ENCODE measurements at regions of chr1 and their contacts with region 1.

Region 1: DNA sequence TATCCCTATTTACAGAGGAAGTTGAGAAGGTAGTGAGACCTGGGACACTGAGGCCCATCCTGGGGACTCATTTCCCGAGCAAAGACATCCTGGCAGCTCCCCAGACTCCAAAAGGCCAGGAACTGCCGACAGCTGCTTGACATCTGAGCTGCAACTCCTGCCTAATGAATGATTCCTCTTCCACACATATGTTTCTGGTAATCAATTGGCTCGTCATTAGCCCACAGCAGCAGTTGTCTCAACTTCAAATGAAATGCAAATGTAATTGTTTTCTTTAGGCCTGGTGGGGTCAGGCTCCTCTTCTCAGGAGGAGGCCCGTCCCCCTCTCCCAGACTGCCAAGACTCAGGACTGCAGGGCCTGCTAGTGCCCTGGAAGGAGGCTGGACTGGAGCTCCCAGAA is 61.8 kb upstream of the DISP3 start:
- DNase-seq: no peak
- H3K4me3 ChIP-seq: no peak overlapping the region
- H3K4me3 Mint-ChIP-seq: no peak overlapping the region
- H3K27ac Mint-ChIP-seq: no peak overlapping the region
- H3K4me1 ChIP-seq: no peaks in the 10 kb centered on the region
- H3K4me1 Mint-ChIP-seq: no peaks in the 10 kb centered on the region
- H3K27me3 ChIP-seq: peaks cover 1% of the 10 kb centered on the region; the same call in 1 of the 2 replicates
- H3K27me3 Mint-ChIP-seq: peaks cover 25% of the 10 kb centered on the region
- CTCF ChIP-seq: no peak

Region 2: DNA sequence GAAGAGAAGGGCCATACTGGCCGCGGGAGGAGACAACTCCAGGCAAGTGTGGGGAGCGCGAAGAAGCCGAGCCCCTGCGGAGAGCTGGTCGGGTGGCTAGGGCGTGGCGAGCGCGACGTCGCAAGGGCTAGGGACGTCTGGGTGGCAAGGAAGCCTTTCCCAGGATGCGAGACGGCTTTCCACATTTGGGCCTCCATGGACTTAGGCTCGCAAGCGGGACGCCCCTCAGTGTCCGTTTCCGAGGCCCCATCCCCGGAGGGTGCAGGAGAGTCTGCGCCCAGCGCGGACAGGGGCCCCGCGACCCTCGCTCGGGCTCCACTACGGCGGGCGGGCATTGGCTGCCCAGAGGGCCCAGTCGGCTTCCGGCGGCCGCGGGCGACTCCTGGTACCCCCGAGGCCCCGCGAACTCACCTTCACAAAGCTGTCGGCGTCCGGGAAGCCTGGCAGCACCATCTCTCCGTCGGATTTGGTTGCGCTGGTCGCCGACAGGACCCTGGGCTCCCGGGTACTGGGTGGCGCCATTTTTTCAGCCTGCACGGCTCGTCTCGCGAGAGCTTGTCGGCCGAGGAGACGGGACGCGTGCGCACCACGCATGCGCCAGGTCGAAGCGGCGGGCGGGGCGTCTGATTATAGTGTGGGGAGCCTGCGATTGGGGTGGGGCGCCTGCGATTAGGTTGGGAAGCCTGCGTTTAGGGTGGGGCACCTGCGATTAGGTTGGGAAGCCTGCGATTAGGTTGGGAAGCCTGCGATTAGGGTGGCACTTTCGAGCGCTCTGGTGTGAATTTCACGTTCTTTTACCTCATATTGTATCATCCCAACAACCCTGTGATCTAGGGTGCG is 317.6 kb before region 1 on chr1 and contains the start of gene EXOSC10:
- CTCF ChIA-PET with region 1: no interaction called
- POLR2A ChIA-PET with region 1: interaction called, 12 read pairs
- intact Hi-C with region 1: no loop called
- DNase-seq: peak; percentile 92 to 94
- H3K4me3 ChIP-seq: peak within 1 kb of the TSS; percentile 85
- H3K4me3 Mint-ChIP-seq: peak within 1 kb of the TSS; percentile 98
- H3K27ac Mint-ChIP-seq: peak within 1 kb of the TSS; percentile 93
- H3K4me1 ChIP-seq: no peaks in the 10 kb centered on the region; the same call in 1 of the 2 replicates
- H3K4me1 Mint-ChIP-seq: no peaks in the 10 kb centered on the region
- H3K27me3 ChIP-seq: no peaks in the 10 kb centered on the region
- H3K27me3 Mint-ChIP-seq: no peaks in the 10 kb centered on the region
- CTCF ChIP-seq: no peak
- total RNA-seq, gene EXOSC10: 80.8 and 83.7 TPM in 2 replicates